ENCODE measurements at regions of chr15 and their contacts with region 1.

Region 1: GRCh38 chr15:38072348-38073177 is 138.1 kb downstream of the TMCO5A start:
- DNase-seq: peak; percentile 71 to 73
- H3K4me3 ChIP-seq: peak overlapping the region; percentile 70
- H3K27ac ChIP-seq: peak overlapping the region; percentile 62
- H3K4me1 ChIP-seq: peaks cover 32% of the 10 kb centered on the region
- H3K27me3 ChIP-seq: no peaks in the 10 kb centered on the region
- CTCF ChIP-seq: no peak; the same call in 1 of the 2 replicates

Region 2: GRCh38 chr15:38021259-38021658 is 51.3 kb before region 1 on chr15:
- CTCF ChIA-PET with region 1: no interaction called
- POLR2A ChIA-PET with region 1: no interaction called
- intact Hi-C with region 1: no loop called
- DNase-seq: no peak
- H3K4me3 ChIP-seq: no peak overlapping the region
- H3K27ac ChIP-seq: no peak overlapping the region
- H3K4me1 ChIP-seq: no peaks in the 10 kb centered on the region
- H3K27me3 ChIP-seq: no peaks in the 10 kb centered on the region
- CTCF ChIP-seq: no peak

Region 3: GRCh38 chr15:38061856-38062649 is 10.5 kb before region 1 on chr15:
- CTCF ChIA-PET with region 1: no interaction called
- POLR2A ChIA-PET with region 1: interaction called, 13 read pairs
- intact Hi-C with region 1: no loop called
- DNase-seq: no peak
- H3K4me3 ChIP-seq: no peak overlapping the region
- H3K27ac ChIP-seq: no peak overlapping the region
- H3K4me1 ChIP-seq: no peaks in the 10 kb centered on the region
- H3K27me3 ChIP-seq: no peaks in the 10 kb centered on the region
- CTCF ChIP-seq: no peak

Region 4: DNA sequence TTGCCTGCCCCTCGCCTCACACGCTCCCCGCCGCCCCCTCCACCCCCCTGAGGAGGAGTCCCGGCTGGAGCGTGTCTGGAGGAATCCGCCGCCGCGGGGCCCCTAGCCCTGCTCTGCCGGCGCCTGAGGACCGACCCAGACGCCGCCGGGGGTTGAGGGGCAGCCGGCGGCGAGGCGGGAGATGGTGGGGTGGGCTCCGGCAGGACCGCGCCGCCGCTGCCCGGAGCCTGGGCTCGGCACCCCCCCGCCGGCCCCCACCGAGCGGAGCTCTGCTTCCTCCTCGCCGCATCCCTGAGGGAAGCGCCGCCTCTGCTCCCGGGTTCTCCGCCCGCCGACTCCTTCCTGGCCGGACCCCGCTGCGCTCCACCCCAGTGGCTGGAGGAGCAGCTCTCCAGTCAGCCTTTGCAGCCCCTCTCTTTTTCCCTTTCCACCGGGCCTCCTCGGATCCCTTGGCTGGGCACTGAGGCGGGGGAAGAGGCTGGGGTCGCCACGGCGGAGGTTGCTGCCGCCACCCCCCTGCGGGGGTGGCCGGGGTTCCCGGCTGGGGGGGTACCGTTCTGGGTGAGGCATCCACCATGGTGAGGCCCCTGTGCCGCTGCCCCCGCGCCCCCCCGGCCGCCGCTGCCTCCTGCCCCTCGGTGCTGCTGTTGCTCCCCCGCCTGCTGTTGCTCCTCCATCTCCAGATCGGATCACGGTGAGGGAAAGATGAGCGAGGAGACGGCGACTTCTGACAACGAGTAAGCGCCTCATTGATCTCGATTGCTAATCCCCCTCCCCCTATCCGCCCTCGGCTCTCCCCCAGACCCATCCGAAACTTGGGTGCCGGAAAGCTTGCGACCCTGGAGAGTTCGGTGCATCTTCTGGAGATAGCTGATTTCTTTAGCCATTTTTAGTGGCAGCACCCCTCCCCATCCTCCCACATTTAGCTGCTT is 180.2 kb after region 1 on chr15 and contains the start of gene SPRED1:
- CTCF ChIA-PET with region 1: no interaction called
- POLR2A ChIA-PET with region 1: interaction called, 3 read pairs
- intact Hi-C with region 1: loop called (anchors 1 kb)
- DNase-seq: peak in 1 of 2 experiments; percentile 60
- H3K4me3 ChIP-seq: peak within 1 kb of the TSS; percentile 80
- H3K27ac ChIP-seq: peak within 1 kb of the TSS; percentile 80
- H3K4me1 ChIP-seq: peaks cover 28% of the 10 kb centered on the region
- H3K27me3 ChIP-seq: no peaks in the 10 kb centered on the region
- CTCF ChIP-seq: no peak
- total RNA-seq, gene SPRED1: 16.5 and 21.3 TPM in 2 replicates

Region 5: DNA sequence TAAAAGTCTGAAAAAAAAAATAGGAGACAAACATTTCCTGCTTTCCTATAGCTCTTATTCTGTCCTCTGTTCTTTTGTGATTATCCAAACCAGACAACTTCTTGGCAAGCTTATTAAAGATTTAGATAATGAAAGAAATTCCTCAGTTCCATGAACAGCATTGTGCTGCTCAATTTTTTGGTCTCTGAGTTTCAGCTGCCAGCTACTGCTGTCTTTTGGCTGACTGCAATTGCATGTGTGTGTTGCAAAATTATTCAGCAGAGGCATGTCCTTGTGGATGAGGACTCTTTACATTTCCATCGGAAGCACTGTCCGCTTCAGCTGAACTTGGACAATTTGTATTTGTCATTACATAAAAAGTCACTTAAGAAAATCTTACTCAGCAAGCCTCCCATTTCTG is 889.4 kb after region 1 on chr15:
- CTCF ChIA-PET with region 1: no interaction called
- POLR2A ChIA-PET with region 1: no interaction called
- intact Hi-C with region 1: no loop called
- DNase-seq: no peak
- H3K4me3 ChIP-seq: no peak overlapping the region
- H3K27ac ChIP-seq: no peak overlapping the region
- H3K4me1 ChIP-seq: no peaks in the 10 kb centered on the region
- H3K27me3 ChIP-seq: no peaks in the 10 kb centered on the region
- CTCF ChIP-seq: no peak

Measured in PC-9 (cell line).